Lower lobe of right lung (tissue), 2 donors: ENCODE measurements at regions of chr11 and their contacts with region 1.

Region 1: GRCh38 chr11:2305140-2305840 is 3.5 kb downstream of the TSPAN32 start:
- DNase-seq: peak; percentile 93
- ATAC-seq: peak; percentile 78 to 80
- H3K4me3 ChIP-seq: peak overlapping the region; percentile 29
- H3K27ac ChIP-seq: peak overlapping the region; percentile 74
- H3K4me1 ChIP-seq: peaks cover 56% of the 10 kb centered on the region
- H3K27me3 ChIP-seq: no peaks in the 10 kb centered on the region
- CTCF ChIP-seq: peak; percentile 96

Region 2: DNA sequence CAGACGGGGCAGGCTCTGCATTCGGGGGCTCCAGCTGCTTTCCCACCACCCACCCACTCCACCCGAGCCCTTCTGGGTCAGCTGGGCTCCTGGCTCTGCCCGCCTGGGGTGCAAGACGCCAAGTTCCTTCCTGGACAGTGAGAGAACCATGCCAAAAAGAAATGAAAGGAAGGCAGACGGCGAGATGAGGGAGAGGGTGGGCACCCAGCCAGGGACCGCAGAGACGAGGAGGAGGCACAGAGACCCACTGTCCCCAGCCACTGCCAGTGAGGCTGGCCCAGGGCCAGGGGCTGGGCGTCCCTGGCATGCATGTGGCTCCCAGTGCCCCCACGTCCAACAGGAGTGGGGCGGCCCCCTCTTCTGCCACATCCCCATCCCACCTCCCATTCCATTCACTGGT is 61.0 kb after region 1 on chr11:
- intact Hi-C with region 1: no loop called
- DNase-seq: no peak
- ATAC-seq: peak in 1 of 2 donors; percentile 4
- H3K4me3 ChIP-seq: no peak overlapping the region
- H3K27ac ChIP-seq: no peak overlapping the region
- H3K4me1 ChIP-seq: peaks cover 13% of the 10 kb centered on the region
- H3K27me3 ChIP-seq: no peaks in the 10 kb centered on the region
- CTCF ChIP-seq: no peak

Region 3: GRCh38 chr11:2420502-2421225 is 115.4 kb after region 1 on chr11:
- intact Hi-C with region 1: loop called (anchors 10 kb)
- DNase-seq: peak; percentile 85
- ATAC-seq: peak; percentile 93 to 96
- H3K4me3 ChIP-seq: no peak overlapping the region
- H3K27ac ChIP-seq: no peak overlapping the region
- H3K4me1 ChIP-seq: peaks cover 16% of the 10 kb centered on the region
- H3K27me3 ChIP-seq: peaks cover 4% of the 10 kb centered on the region
- CTCF ChIP-seq: peak; percentile 98